ENCODE measurements at regions of chr18 and their contacts with region 1.

Region 1: GRCh38 chr18:9951022-9951859 is 37.4 kb downstream of the VAPA start:
- DNase-seq: peak; percentile 61
- ATAC-seq: peak; percentile 72
- H3K4me3 ChIP-seq: no peak overlapping the region
- H3K27ac ChIP-seq: no peak overlapping the region
- H3K4me1 ChIP-seq: no peaks in the 10 kb centered on the region; the same call in 1 of the 2 replicates
- H3K27me3 ChIP-seq: no peaks in the 10 kb centered on the region
- CTCF ChIP-seq: peak; percentile 87

Region 2: DNA sequence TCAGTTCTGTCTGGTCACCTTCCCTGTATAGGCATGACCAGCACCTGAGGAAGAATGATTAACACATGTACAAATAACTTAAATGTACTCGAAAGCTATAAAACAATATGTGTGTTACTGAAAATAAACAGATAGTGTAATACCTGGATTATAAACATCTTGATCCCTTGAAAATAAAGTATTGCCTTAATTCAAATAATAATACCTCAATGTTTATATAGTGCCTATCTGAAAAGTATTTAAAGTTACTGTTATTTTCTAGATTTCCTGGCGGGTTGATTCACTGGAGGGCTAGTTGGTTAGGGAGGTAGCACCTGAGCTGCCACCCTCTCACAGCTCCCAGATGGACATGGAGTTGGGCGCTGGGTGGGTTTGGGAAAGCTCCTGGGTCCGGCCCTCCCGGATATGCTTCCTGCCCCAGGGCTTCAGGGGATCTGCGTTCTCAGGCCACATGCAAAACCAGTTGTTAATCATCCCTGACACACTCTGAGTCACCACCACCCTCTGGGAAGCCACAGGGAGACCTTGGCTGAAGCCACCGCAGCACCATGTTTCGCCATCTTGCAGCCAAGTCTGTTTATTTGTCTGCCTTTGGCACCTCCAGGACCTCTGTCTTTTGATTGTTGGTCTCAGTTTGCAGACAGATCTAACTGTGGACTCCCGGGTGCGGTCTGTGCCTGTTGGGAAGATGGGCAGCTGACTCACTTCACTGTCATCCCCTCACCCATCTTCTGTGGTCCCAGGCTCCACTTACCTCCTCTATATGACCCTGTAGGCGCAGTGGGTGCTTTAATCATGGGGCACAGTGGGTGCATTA is 207.8 kb before region 1 on chr18:
- CTCF ChIA-PET with region 1: no interaction called
- POLR2A ChIA-PET with region 1: no interaction called
- intact Hi-C with region 1: loop called (anchors 2 kb)
- DNase-seq: peak; percentile 99
- ATAC-seq: peak; percentile 78
- H3K4me3 ChIP-seq: peak overlapping the region; percentile 50
- H3K27ac ChIP-seq: peak overlapping the region; percentile 92
- H3K4me1 ChIP-seq: peaks cover 56% of the 10 kb centered on the region
- H3K27me3 ChIP-seq: no peaks in the 10 kb centered on the region
- CTCF ChIP-seq: no peak

Region 3: GRCh38 chr18:9808295-9809241 is 142.7 kb before region 1 on chr18:
- CTCF ChIA-PET with region 1: interaction called, 5 read pairs
- POLR2A ChIA-PET with region 1: no interaction called
- intact Hi-C with region 1: loop called (anchors 2 kb)
- DNase-seq: peak; percentile 72
- ATAC-seq: peak; percentile 81
- H3K4me3 ChIP-seq: peak overlapping the region; percentile 48
- H3K27ac ChIP-seq: no peak overlapping the region
- H3K4me1 ChIP-seq: peaks cover 11% of the 10 kb centered on the region
- H3K27me3 ChIP-seq: no peaks in the 10 kb centered on the region
- CTCF ChIP-seq: no peak

Region 4: GRCh38 chr18:9905401-9905922 is 45.8 kb before region 1 on chr18:
- CTCF ChIA-PET with region 1: no interaction called
- POLR2A ChIA-PET with region 1: no interaction called
- intact Hi-C with region 1: no loop called
- DNase-seq: peak; percentile 20
- ATAC-seq: no peak
- H3K4me3 ChIP-seq: no peak overlapping the region
- H3K27ac ChIP-seq: no peak overlapping the region
- H3K4me1 ChIP-seq: peaks cover 4% of the 10 kb centered on the region; the same call in 1 of the 2 replicates
- H3K27me3 ChIP-seq: no peaks in the 10 kb centered on the region
- CTCF ChIP-seq: no peak

Region 5: GRCh38 chr18:10299643-10300042 is 348.4 kb after region 1 on chr18:
- CTCF ChIA-PET with region 1: no interaction called
- POLR2A ChIA-PET with region 1: no interaction called
- intact Hi-C with region 1: no loop called
- DNase-seq: no peak
- ATAC-seq: no peak
- H3K4me3 ChIP-seq: no peak overlapping the region
- H3K27ac ChIP-seq: no peak overlapping the region
- H3K4me1 ChIP-seq: no peaks in the 10 kb centered on the region
- H3K27me3 ChIP-seq: peaks cover 29% of the 10 kb centered on the region
- CTCF ChIP-seq: no peak